Natural killer cell (primary cell): ENCODE measurements at regions of chr17 and their contacts with region 1.

Region 1: DNA sequence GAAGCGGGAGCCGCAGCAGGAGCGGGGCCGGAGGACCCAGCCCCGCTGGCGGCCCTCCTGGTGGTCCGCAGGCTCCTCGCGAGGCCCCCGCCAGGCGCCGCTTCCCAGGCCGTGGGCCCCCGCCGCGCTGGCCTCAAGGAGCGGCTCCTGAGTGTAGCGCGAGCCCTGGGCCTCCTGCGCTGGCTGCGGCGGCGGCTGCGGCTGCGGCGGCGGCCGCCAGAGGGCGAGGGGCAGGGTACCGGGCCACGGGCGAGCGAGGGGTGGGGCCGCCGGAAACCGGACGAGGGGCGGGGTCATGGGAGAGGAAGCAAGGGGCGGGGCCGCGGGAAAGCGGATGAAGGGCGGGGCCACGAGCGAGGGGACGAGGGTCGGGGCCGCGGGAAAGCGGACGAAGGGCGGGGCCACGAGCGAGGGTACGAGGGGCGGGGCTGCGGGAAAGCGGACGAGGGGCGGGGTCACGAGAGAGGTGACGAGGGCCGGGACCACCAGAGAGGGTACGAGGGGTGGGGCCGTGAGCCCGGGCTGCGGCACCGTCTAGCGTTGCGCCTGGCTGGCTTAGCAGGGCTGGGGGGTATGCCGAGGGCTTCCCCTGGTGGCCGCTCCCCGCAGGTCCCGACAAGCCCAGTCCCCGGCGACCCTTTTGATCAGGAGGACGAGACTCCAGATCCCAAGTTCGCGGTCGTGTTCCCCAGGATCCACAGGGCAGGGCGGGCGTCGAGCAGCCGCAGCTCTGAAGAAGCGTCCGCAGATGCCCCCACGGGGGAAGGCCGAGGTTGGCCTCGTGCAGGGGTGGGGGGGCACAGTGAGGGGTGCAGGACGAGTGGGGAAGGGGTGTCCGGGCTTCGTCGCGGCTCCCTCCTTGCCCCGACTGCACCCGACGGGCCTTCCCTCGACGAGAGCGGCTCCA is 1.7 kb downstream of the MYO15B start:
- DNase-seq: peak; percentile 86 to 95
- ATAC-seq: peak; percentile 78 to 89 (median 82)
- H3K4me3 ChIP-seq: peak overlapping the region; percentile 70
- H3K4me3 Mint-ChIP-seq: peak overlapping the region; percentile 79
- H3K27ac ChIP-seq: peak overlapping the region; percentile 45
- H3K27ac Mint-ChIP-seq: peak overlapping the region in 1 of 2 donors; percentile 80
- H3K4me1 ChIP-seq: peaks cover 30% of the 10 kb centered on the region
- H3K4me1 Mint-ChIP-seq: peaks cover 7 to 25% of the 10 kb centered on the region in 2 donors
- H3K27me3 ChIP-seq: no peaks in the 10 kb centered on the region
- H3K27me3 Mint-ChIP-seq: no peaks in the 10 kb centered on the region
- CTCF ChIP-seq: peak; percentile 48

Region 2: GRCh38 chr17:75515496-75516254 is 73.6 kb before region 1 on chr17 and contains the start of gene CASKIN2:
- intact Hi-C with region 1: loop called (anchors 5 kb)
- DNase-seq: peak; percentile 72 to 89
- ATAC-seq: peak; percentile 64 to 83 (median 67)
- H3K4me3 ChIP-seq: peak within 1 kb of the TSS; percentile 83
- H3K4me3 Mint-ChIP-seq: peak within 1 kb of the TSS; percentile 80
- H3K27ac ChIP-seq: no peak within 1 kb of the TSS
- H3K27ac Mint-ChIP-seq: peak within 1 kb of the TSS in 1 of 2 donors; percentile 88
- H3K4me1 ChIP-seq: peaks cover 40% of the 10 kb centered on the region
- H3K4me1 Mint-ChIP-seq: peaks cover 19 to 23% of the 10 kb centered on the region in 2 donors
- H3K27me3 ChIP-seq: no peaks in the 10 kb centered on the region
- H3K27me3 Mint-ChIP-seq: no peaks in the 10 kb centered on the region
- CTCF ChIP-seq: peak; percentile 93
- total RNA-seq, gene CASKIN2: 0.49 to 1.8 (median 1.7) TPM

Region 3: GRCh38 chr17:75535119-75535537 is 54.1 kb before region 1 on chr17:
- intact Hi-C with region 1: loop called (anchors 5 kb)
- DNase-seq: peak; percentile 70 to 81
- ATAC-seq: peak; percentile 93 to 95 (median 94)
- H3K4me3 ChIP-seq: peak overlapping the region; percentile 1
- H3K4me3 Mint-ChIP-seq: peak overlapping the region; percentile 88
- H3K27ac ChIP-seq: peak overlapping the region; percentile 83
- H3K27ac Mint-ChIP-seq: peak overlapping the region; percentile 92 to 94
- H3K4me1 ChIP-seq: peaks cover 42% of the 10 kb centered on the region
- H3K4me1 Mint-ChIP-seq: peaks cover 33 to 61% of the 10 kb centered on the region in 2 donors
- H3K27me3 ChIP-seq: no peaks in the 10 kb centered on the region
- H3K27me3 Mint-ChIP-seq: no peaks in the 10 kb centered on the region
- CTCF ChIP-seq: no peak

Region 4: DNA sequence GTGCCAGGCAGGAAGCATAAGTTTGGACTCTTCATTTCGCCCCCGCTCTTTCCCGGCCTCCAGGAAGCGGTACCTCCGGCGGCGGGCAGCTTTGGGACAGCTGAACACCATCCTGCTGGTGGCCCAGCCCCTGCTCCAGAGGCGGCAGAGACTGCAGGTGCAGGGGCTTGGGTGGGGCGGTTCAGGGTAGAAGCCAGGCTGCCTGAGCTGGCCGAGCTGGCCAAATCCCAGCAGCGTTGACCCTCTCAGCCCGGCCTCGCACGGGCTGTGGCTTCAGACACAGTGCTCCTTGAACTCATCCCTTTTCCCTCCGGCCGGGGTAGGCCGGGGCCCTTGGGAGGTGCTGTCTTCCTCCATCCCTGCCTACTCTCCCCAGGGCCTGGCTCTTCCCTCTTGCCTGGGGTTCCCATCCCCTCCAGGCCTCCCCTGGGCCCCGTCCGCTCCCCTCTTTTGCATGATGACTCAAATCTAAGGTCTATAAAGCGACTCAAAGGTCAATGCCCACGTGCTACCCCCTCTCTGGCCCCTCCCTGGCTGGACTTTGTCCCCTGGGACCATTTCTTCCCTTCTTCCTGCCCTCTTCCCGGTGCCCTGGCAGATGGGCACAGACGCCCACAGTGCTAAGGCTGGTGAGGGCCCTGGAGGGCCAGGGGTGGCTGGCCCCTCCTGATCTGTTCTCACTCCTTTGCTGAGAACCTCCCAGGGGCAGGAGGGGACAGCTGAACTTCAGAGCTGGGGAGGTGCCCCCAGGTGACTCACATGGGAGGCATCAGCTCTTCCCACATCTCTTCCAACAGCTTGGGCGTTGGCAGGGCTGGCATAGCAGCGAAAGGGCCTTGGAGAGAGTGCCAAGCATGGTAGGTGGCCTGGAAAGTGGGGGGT is 21.1 kb after region 1 on chr17:
- intact Hi-C with region 1: no loop called
- DNase-seq: no peak
- ATAC-seq: no peak
- H3K4me3 ChIP-seq: no peak overlapping the region
- H3K4me3 Mint-ChIP-seq: no peak overlapping the region
- H3K27ac ChIP-seq: no peak overlapping the region
- H3K27ac Mint-ChIP-seq: no peak overlapping the region
- H3K4me1 ChIP-seq: no peaks in the 10 kb centered on the region
- H3K4me1 Mint-ChIP-seq: no peaks in the 10 kb centered on the region
- H3K27me3 ChIP-seq: no peaks in the 10 kb centered on the region
- H3K27me3 Mint-ChIP-seq: no peaks in the 10 kb centered on the region
- CTCF ChIP-seq: no peak